Spleen (tissue), 13 donors: ENCODE measurements at regions of chr13 and their contacts with region 1.

Region 1: GRCh38 chr13:39935155-39935554 is 279.7 kb downstream of the COG6 start:
- DNase-seq: no peak
- H3K4me3 ChIP-seq: no peak overlapping the region
- H3K27ac ChIP-seq: no peak overlapping the region
- H3K4me1 ChIP-seq: peaks cover 0 to 3% (median 0%) of the 10 kb centered on the region in 6 donors
- H3K27me3 ChIP-seq: no peaks in the 10 kb centered on the region
- CTCF ChIP-seq: no peak
- POLR2A ChIP-seq: no peak

Region 2: GRCh38 chr13:39777527-39778061 is 157.6 kb before region 1 on chr13:
- intact Hi-C with region 1: loop called (anchors 10 kb)
- DNase-seq: no peak
- H3K4me3 ChIP-seq: no peak overlapping the region
- H3K27ac ChIP-seq: no peak overlapping the region
- H3K4me1 ChIP-seq: peaks cover 0 to 13% (median 0%) of the 10 kb centered on the region in 6 donors
- H3K27me3 ChIP-seq: no peaks in the 10 kb centered on the region
- CTCF ChIP-seq: peak in 5 of 11 experiments; percentile 13 to 39 (median 27)
- POLR2A ChIP-seq: no peak